ENCODE measurements at regions of chr10 and their contacts with region 1.

Region 1: GRCh38 chr10:117530791-117531190 is 11.8 kb upstream of the EMX2 start:
- DNase-seq: no peak
- ATAC-seq: no peak
- H3K4me3 Mint-ChIP-seq: no peak overlapping the region
- H3K27ac Mint-ChIP-seq: no peak overlapping the region
- H3K4me1 Mint-ChIP-seq: peaks cover 4% of the 10 kb centered on the region
- H3K27me3 Mint-ChIP-seq: peaks cover 56% of the 10 kb centered on the region
- CTCF ChIP-seq: no peak

Region 2: DNA sequence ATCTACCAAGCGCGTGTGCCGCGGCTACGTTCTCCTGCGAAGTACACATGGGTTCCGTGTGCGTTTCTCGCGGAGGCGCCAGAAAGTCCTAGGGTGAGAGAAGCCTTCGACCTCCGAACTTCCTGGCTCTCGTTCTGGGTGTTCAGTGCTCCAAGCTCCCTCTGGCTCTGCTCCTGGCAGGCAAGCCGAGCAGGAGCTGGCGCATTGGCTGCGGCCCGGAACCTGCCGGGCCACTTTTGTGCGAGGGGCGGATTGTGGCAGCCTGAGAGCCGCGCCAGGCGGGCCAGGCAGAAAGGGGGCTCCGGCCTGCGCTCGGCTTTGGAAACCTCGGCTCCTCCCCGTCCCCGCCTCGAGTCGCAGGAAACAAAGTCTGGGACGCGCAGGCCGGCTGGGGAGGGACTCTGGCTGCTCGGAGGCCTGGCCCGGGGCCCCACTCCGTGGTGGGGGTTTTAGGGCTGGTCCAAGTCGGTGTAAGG is 21.4 kb after region 1 on chr10:
- CTCF ChIA-PET with region 1: no interaction called
- POLR2A ChIA-PET with region 1: no interaction called
- intact Hi-C with region 1: loop called (anchors 2 kb)
- DNase-seq: no peak
- ATAC-seq: no peak
- H3K4me3 Mint-ChIP-seq: no peak overlapping the region
- H3K27ac Mint-ChIP-seq: no peak overlapping the region
- H3K4me1 Mint-ChIP-seq: peaks cover 4% of the 10 kb centered on the region
- H3K27me3 Mint-ChIP-seq: peaks cover 77% of the 10 kb centered on the region
- CTCF ChIP-seq: no peak